GM12878 (cell line): ENCODE measurements at regions of chr10 and their contacts with region 1.

Region 1: DNA sequence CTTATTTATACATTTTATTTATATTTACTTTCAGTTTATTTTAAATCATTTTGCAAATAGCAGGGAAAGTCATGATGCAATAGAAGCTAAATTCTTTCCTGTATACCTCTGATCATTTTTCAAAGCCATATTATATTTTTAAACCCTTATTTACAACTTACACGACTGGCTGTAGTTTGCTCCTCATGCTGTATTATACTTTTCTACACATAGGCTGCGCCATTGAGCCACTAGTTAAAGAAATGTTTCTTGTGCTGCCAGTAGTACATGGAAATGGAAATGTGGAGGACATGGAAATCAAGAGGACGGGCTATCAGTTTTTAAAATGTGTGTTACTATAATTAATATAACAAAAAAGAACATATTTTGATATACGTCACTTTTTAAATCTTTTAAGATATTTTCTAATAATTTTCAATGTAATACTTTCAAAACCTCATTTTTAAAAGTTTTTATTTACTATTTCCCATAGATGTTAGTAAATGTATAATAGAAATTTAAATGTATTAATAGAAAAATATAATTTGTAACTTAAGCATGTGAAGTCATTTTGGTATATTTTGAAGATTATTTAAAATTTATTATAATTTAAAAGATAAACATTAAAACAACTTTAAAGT is 118.5 kb downstream of the VTI1A start:
- DNase-seq: no peak
- ATAC-seq: peak; percentile 64
- H3K4me3 ChIP-seq: no peak overlapping the region
- H3K27ac ChIP-seq: no peak overlapping the region
- H3K4me1 ChIP-seq: no peaks in the 10 kb centered on the region
- H3K27me3 ChIP-seq: no peaks in the 10 kb centered on the region
- CTCF ChIP-seq: peak; percentile 48 to 58 (median 54)
- EP300 ChIP-seq: no peak
- POLR2A ChIP-seq: no peak
- RAD21 ChIP-seq: peak; percentile 73

Region 2: DNA sequence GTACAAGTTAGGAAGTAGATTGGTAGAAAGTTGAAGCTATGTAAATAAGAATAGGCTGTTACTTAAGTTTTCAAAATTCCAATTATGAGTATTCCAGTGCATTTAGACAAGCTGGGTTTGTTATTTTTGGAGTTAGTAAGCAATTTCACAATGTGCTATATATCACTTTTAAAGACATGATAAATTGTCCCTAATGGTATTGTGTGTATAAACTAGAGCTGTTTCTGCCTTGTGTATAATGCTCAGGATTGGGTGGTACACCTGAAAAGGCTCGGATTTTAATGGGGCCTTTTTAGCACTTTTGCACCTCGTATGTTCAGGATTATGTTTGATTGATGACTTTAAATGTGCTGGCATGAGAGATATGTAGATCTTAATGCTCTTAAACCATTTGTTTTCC is 57.2 kb after region 1 on chr10:
- CTCF ChIA-PET with region 1: no interaction called
- POLR2A ChIA-PET with region 1: no interaction called
- RAD21 ChIA-PET with region 1: no interaction called
- SMC1A ChIA-PET with region 1: no interaction called
- in situ Hi-C with region 1: no loop called
- intact Hi-C with region 1: no loop called
- DNase-seq: no peak
- ATAC-seq: no peak
- H3K4me3 ChIP-seq: no peak overlapping the region
- H3K27ac ChIP-seq: no peak overlapping the region
- H3K4me1 ChIP-seq: no peaks in the 10 kb centered on the region
- H3K27me3 ChIP-seq: no peaks in the 10 kb centered on the region
- CTCF ChIP-seq: no peak
- EP300 ChIP-seq: no peak
- POLR2A ChIP-seq: no peak
- RAD21 ChIP-seq: no peak

Region 3: DNA sequence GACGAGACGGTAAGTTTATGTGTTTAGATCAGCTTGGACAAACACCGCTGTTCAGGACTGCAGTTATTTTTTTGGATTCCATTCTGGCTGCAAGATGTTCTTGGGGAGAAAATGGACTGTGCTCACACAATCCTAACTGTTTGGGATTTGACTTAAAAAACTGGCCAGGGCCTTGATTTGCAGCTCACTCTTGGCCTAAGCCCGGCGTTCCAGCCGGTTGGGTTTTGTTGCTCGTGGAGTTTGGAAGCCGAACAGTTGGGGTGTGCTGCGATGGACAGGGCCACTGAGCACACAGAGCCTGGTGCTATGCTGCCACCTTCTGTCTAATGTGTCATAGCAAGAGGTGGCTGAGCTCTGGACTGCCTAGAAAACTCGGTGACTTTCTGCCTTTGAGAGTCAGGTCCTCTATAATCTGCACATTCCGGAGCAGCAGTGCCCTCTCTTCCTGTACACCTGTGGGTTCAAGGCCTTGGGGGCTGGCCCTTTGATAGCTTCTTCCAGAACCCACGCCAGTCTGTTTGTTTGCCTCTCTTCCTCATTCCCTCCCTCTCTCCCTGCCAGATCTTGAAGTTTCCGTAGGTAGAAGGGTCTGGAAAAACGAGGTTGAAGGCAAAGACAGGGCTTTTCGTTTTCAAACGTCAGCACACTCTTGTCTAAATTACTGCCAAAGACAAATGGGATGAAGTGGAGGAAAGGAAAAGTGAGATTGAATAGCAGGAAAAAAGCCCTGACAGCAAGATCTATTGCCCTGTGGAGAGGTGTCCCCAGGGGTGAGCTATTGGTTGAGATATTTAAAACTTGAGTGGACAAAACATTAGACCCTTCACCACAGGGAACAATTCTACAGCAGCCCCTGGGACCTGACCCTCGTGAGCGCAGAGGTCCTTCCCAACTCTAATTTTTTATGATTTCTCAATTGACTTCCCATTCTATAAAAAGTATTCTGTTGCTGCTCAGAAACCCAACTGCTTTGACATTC is 819.8 kb after region 1 on chr10:
- CTCF ChIA-PET with region 1: interaction called, 3 read pairs
- POLR2A ChIA-PET with region 1: no interaction called
- RAD21 ChIA-PET with region 1: interaction called, 3 read pairs
- SMC1A ChIA-PET with region 1: no interaction called
- in situ Hi-C with region 1: no loop called
- intact Hi-C with region 1: loop called (anchors 2 kb)
- DNase-seq: no peak
- ATAC-seq: peak; percentile 98
- H3K4me3 ChIP-seq: no peak overlapping the region
- H3K27ac ChIP-seq: no peak overlapping the region
- H3K4me1 ChIP-seq: no peaks in the 10 kb centered on the region
- H3K27me3 ChIP-seq: peaks cover 0 to 4% of the 10 kb centered on the region in 2 experiments; a peak in 2 of 4 replicates
- CTCF ChIP-seq: peak; percentile 72 to 82 (median 73); a peak in 5 of 6 replicates
- EP300 ChIP-seq: no peak
- POLR2A ChIP-seq: no peak
- RAD21 ChIP-seq: peak; percentile 87

Region 4: DNA sequence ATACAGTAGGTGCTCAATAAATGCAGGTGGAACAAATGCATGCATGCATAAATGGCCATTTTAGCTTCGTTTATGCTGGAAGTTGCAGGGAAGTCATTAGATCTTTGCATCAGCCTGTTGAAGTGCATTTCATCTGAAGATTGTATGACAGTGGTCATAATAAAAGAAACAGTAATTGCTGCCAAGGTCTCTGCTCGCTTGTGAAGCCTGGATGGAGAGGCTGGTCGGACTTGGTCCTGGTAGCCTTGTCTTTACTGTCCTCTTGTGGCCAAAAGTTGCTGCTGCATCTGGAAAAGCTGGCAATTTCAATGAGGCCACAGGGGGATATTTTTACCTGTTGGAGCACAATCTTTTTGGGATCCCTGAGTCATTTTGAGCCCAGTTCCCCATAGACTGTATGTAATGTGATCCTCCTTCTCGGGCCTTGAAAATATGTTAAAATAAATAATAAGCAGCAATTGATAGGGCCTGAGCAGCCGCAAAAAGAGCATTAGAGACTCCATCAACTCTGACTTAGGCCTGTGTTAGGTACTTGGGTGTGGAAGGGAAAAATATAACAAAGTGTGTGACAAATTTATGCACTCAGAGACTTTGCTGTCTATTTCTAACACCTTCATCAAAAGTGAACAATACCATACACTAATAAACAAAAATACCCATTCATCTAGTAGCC is 955.7 kb after region 1 on chr10:
- CTCF ChIA-PET with region 1: no interaction called
- POLR2A ChIA-PET with region 1: no interaction called
- RAD21 ChIA-PET with region 1: no interaction called
- SMC1A ChIA-PET with region 1: no interaction called
- in situ Hi-C with region 1: no loop called
- intact Hi-C with region 1: loop called (anchors 10 kb)
- DNase-seq: no peak
- ATAC-seq: peak; percentile 83
- H3K4me3 ChIP-seq: no peak overlapping the region
- H3K27ac ChIP-seq: no peak overlapping the region
- H3K4me1 ChIP-seq: no peaks in the 10 kb centered on the region
- H3K27me3 ChIP-seq: no peaks in the 10 kb centered on the region; a peak in 1 of 4 replicates
- CTCF ChIP-seq: peak; percentile 87 to 97 (median 94)
- EP300 ChIP-seq: no peak
- POLR2A ChIP-seq: no peak
- RAD21 ChIP-seq: peak; percentile 76